ENCODE measurements at regions of chr16 and their contacts with region 1.

Region 1: GRCh38 chr16:83926726-83927397 is 26.2 kb upstream of the OSGIN1 start:
- DNase-seq: peak in 1 of 2 donors; percentile 83
- H3K4me3 ChIP-seq: peak overlapping the region in 1 of 2 donors; percentile 31
- H3K27ac ChIP-seq: no peak overlapping the region
- H3K4me1 ChIP-seq: peaks cover 0 to 6% of the 10 kb centered on the region in 2 donors
- H3K27me3 ChIP-seq: no peaks in the 10 kb centered on the region
- CTCF ChIP-seq: peak; percentile 81 to 98 (median 96)

Region 2: DNA sequence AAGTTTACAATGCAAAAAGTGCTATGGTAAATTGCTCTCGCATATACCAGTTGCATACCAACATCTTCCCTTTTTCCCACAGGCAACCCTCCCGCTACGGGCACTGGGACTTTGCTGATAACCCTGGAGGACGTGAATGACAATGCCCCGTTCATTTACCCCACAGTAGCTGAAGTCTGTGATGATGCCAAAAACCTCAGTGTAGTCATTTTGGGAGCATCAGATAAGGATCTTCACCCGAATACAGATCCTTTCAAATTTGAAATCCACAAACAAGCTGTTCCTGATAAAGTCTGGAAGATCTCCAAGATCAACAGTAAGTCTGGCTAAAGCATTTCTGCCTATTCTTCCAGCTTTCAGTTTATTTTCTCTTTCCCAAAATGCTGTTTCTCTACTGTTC is 147.0 kb before region 1 on chr16:
- intact Hi-C with region 1: no loop called
- DNase-seq: no peak
- H3K4me3 ChIP-seq: peak overlapping the region in 1 of 2 donors; percentile 43
- H3K27ac ChIP-seq: peak overlapping the region in 1 of 2 donors; percentile 22
- H3K4me1 ChIP-seq: peaks cover 5 to 11% of the 10 kb centered on the region in 2 donors
- H3K27me3 ChIP-seq: no peaks in the 10 kb centered on the region
- CTCF ChIP-seq: no peak

Region 3: DNA sequence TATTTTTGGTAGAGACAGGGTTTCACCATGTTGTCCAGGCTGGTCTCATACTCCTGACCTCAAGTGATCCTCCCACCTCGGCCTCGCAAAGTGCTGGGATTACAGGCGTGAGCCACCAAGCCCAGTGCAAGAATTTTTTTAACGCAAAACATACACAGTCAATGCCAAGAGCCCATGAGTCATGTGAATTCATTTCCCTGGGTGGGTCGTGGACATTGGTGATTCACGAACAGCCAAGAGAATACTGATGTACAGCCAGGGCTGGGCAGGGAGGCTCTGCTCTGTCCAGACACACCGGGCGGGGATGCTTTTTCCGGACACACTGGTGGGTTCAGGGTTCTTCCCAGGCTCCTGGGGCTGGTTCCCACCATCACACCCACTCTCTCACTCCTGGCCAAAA is 98.0 kb after region 1 on chr16:
- intact Hi-C with region 1: no loop called
- DNase-seq: no peak
- H3K4me3 ChIP-seq: no peak overlapping the region
- H3K27ac ChIP-seq: no peak overlapping the region
- H3K4me1 ChIP-seq: no peaks in the 10 kb centered on the region
- H3K27me3 ChIP-seq: no peaks in the 10 kb centered on the region
- CTCF ChIP-seq: no peak

Region 4: DNA sequence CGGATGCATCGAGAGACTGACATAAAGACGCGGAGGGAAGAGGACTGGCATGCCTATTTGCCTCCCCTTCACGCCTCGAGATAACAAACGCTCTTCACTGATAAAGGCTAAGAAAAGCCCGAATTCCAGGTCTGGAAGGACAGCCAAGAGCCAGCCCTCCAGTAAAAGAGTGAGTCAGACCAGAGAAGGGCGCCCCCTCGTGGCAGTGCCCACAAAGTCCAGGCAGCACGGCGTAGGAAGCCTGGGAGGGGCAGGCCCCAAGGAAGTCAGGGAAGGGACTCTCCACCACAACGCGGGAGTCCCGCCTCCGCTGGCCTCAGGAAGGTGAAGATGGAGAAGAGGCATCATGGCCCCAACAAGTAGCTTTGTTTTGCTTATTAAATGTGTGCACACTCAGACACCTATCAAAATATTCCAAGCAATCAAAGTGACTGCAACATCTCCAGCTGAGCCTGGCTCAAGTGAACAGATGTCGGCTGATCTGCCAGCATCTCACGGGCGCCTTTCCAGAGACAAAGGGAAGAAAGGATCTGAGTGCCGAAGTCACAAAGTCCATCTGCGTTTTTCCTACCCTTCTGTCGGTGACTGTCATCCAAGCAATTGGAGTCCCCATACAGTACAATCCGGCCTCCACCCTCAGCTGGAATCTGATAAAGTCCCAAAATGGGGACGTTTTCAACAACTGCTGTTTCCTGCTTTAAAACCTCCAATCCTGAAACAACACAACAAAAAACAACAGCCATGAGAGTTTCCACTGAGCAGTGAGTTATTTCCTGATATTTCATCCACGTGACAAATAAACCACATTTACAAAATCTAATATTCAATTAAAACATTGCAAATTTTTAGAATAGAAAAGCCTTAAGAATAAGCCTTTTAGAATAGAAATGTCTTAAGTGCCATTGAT is 136.1 kb after region 1 on chr16:
- intact Hi-C with region 1: loop called (anchors 2 kb)
- DNase-seq: peak; percentile 26 to 86
- H3K4me3 ChIP-seq: no peak overlapping the region
- H3K27ac ChIP-seq: no peak overlapping the region
- H3K4me1 ChIP-seq: no peaks in the 10 kb centered on the region
- H3K27me3 ChIP-seq: no peaks in the 10 kb centered on the region
- CTCF ChIP-seq: peak; percentile 64 to 80 (median 80)

Region 5: GRCh38 chr16:84228321-84228838 is 301.5 kb after region 1 on chr16:
- intact Hi-C with region 1: no loop called
- DNase-seq: peak; percentile 52 to 92
- H3K4me3 ChIP-seq: peak overlapping the region; percentile 0 to 39
- H3K27ac ChIP-seq: peak overlapping the region; percentile 63 to 64
- H3K4me1 ChIP-seq: peaks cover 5 to 6% of the 10 kb centered on the region in 2 donors
- H3K27me3 ChIP-seq: no peaks in the 10 kb centered on the region
- CTCF ChIP-seq: no peak